Right cardiac atrium (tissue), 5 donors: ENCODE measurements at regions of chr18 and their contacts with region 1.

Region 1: DNA sequence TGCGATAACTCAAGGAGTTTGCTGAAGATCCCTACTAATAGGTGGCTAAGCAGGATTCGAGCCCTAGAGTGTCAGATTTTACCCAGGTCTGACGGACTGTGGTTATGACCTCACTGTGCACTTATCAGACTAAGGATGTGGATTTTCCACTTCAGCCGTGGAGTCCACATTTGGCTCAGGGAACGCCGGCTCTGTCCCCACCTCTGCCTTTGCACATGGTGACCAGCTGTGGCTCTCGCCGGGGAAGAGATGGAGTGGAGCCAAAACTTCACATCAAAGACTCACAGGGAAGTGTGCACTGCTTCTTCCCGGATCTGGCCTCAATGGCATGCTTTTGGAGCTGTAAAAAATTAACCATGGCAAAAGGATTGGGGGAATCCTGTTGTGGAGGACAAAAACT is 249.3 kb upstream of the APCDD1 start:
- DNase-seq: peak in 2 of 3 donors; percentile 42 to 62
- ATAC-seq: peak in 1 of 2 donors; percentile 85
- H3K4me3 ChIP-seq: no peak overlapping the region
- H3K27ac ChIP-seq: no peak overlapping the region
- H3K4me1 ChIP-seq: peaks cover 6% of the 10 kb centered on the region
- H3K27me3 ChIP-seq: no peaks in the 10 kb centered on the region

Region 2: GRCh38 chr18:10020171-10020570 is 185.0 kb before region 1 on chr18:
- intact Hi-C with region 1: no loop called
- DNase-seq: no peak
- ATAC-seq: no peak
- H3K4me3 ChIP-seq: no peak overlapping the region
- H3K27ac ChIP-seq: no peak overlapping the region
- H3K4me1 ChIP-seq: no peaks in the 10 kb centered on the region
- H3K27me3 ChIP-seq: no peaks in the 10 kb centered on the region

Region 3: DNA sequence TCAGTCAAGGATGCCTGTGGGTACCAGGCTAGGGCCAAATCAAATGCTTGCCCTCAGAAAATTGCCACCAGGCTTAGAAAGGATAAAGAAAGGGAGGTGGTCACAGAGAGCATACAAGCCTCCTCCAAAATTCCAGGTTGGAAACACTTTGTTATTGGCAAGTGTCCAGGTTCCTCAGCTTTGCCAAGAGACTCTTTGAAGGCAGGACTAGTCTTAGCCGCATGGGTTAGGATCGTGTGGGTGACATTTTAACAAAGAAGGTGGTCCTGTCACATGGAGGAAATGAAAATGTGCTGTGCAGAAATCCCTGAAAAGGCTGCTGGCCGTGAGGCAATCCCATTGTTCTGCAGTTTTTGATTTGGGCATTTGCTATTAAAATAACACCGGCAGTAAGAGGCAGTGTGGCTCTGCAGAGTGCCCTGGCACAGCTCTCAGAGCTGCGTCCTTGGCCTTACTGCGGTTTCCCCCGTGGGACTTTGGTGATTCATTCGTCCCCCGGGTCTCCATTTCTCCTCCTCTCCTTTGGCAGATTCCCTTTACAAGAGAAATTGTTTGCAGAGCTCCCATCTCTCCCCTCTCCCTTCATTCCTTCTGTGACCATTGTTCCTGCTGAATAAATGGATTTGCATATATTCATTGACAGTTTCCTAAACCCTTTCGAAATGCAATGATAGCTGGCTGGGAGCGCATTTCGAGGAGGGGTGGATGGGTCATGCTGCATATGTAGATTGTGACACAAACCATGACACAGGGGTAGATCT is 104.0 kb before region 1 on chr18:
- intact Hi-C with region 1: no loop called
- DNase-seq: peak in 2 of 3 donors; percentile 51 to 69
- ATAC-seq: peak; percentile 75
- H3K4me3 ChIP-seq: no peak overlapping the region
- H3K27ac ChIP-seq: no peak overlapping the region
- H3K4me1 ChIP-seq: peaks cover 6% of the 10 kb centered on the region
- H3K27me3 ChIP-seq: no peaks in the 10 kb centered on the region

Region 4: GRCh38 chr18:10261302-10262276 is 56.4 kb after region 1 on chr18:
- intact Hi-C with region 1: loop called in 1 of 4 experiments (anchors 10 kb)
- DNase-seq: no peak
- ATAC-seq: no peak
- H3K4me3 ChIP-seq: no peak overlapping the region
- H3K27ac ChIP-seq: no peak overlapping the region
- H3K4me1 ChIP-seq: no peaks in the 10 kb centered on the region
- H3K27me3 ChIP-seq: no peaks in the 10 kb centered on the region